Dendritic cell treated with granulocyte-macrophage colony-stimulating factor and Interleukin-4, amounts not matched to agents 40 ng/mL and 50 ng/mL, for 4 days (primary cell): ENCODE measurements at regions of chr10 and their contacts with region 1.

Region 1: GRCh38 chr10:21989453-21990154 is 13.9 kb downstream of the DNAJC1 start:
- H3K4me3 Mint-ChIP-seq: no peak overlapping the region
- H3K27ac Mint-ChIP-seq: no peak overlapping the region
- H3K4me1 Mint-ChIP-seq: peaks cover 13% of the 10 kb centered on the region
- H3K27me3 Mint-ChIP-seq: no peaks in the 10 kb centered on the region

Region 2: GRCh38 chr10:21533467-21534279 is 455.9 kb before region 1 on chr10 and contains the start of gene MLLT10:
- intact Hi-C with region 1: no loop called
- H3K4me3 Mint-ChIP-seq: peak within 1 kb of the TSS; percentile 86
- H3K27ac Mint-ChIP-seq: peak within 1 kb of the TSS; percentile 100
- H3K4me1 Mint-ChIP-seq: peaks cover 24% of the 10 kb centered on the region
- H3K27me3 Mint-ChIP-seq: no peaks in the 10 kb centered on the region

Region 3: DNA sequence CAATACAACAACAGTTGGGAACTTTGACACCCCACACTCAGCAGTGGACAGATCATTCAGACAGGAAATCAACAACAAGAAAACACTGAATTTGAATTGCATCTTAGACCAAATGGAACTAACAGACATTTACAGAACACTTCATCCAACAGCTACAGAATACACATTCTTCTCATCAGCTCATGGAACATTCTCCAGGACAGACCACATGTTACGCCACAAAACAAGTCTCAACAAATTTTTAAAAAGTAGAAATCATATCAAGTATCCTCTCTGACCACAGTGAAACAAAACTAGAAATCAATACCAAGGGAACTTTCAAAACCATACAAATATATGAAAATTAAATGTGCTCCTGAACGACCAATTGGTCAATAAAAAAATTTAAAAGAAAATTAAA is 198.3 kb before region 1 on chr10:
- intact Hi-C with region 1: no loop called
- H3K4me3 Mint-ChIP-seq: no peak overlapping the region
- H3K27ac Mint-ChIP-seq: no peak overlapping the region
- H3K4me1 Mint-ChIP-seq: no peaks in the 10 kb centered on the region
- H3K27me3 Mint-ChIP-seq: no peaks in the 10 kb centered on the region

Region 4: DNA sequence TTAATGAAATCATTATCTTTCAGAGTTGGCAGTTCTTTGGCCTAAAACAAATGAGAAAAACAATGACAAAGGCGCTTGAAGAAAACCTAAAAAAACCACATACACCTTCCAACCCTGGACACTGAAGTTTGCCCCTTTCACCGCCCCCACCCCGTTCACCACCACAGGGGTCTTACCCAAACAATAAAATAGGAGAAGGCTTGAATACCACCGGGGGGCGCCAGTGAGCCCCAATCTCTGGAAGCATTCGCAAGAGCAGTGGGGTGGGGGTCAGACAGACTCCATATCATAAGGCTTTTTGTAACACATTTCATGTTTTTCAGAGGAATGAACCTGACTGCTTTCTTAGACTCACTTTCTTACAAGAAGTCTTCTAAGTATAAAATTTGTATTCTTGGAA is 561.1 kb after region 1 on chr10:
- intact Hi-C with region 1: loop called (anchors 10 kb)
- H3K4me3 Mint-ChIP-seq: no peak overlapping the region
- H3K27ac Mint-ChIP-seq: no peak overlapping the region
- H3K4me1 Mint-ChIP-seq: no peaks in the 10 kb centered on the region
- H3K27me3 Mint-ChIP-seq: no peaks in the 10 kb centered on the region

Region 5: DNA sequence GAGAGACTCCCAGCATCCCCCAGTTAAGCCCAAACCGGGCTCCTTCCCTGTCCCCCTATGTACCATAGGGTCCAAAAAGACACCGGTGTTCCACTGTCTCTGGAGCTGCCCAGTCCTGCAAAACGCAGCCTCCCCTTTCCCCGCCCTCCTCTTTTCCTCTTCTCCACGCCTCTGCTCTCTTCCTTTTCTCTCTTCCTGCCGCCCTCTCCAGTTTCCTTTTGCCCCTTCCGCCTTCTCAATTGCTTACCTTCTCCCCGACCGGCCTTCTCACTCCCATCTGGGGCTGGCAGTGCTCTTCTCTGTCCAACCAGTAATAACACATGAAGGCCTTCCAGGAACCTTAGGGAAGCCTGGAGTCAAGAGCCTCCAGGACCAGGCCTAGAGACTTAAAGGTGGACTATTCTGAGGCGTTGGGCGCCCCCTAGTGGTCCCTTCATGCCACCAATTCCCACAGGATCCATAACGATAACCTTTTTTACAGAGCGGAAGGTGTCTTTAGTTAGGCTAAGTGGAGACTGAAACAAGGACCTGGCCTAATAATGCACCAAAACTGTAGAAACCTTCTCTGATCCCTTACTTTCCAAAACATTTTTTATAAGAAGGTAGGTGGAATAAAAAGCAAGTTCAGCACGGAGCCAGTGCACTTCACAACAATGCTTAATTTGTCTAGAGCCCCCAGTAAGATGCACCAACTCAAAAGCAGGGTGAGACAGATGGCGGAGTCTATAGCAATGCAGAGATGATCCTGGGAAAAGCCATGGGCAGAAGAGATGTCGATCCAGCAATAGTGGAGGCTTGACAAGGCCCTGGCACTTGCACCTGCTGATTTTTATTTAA is 1078.6 kb after region 1 on chr10:
- intact Hi-C with region 1: loop called (anchors 5 kb)
- H3K4me3 Mint-ChIP-seq: no peak overlapping the region
- H3K27ac Mint-ChIP-seq: no peak overlapping the region
- H3K4me1 Mint-ChIP-seq: peaks cover 5% of the 10 kb centered on the region
- H3K27me3 Mint-ChIP-seq: no peaks in the 10 kb centered on the region